Activated CD4-positive, alpha-beta memory T cell treated with anti-CD3 and anti-CD28 coated beads for 36 hours (primary cell): ENCODE measurements at regions of chr12 and their contacts with region 1.

Region 1: DNA sequence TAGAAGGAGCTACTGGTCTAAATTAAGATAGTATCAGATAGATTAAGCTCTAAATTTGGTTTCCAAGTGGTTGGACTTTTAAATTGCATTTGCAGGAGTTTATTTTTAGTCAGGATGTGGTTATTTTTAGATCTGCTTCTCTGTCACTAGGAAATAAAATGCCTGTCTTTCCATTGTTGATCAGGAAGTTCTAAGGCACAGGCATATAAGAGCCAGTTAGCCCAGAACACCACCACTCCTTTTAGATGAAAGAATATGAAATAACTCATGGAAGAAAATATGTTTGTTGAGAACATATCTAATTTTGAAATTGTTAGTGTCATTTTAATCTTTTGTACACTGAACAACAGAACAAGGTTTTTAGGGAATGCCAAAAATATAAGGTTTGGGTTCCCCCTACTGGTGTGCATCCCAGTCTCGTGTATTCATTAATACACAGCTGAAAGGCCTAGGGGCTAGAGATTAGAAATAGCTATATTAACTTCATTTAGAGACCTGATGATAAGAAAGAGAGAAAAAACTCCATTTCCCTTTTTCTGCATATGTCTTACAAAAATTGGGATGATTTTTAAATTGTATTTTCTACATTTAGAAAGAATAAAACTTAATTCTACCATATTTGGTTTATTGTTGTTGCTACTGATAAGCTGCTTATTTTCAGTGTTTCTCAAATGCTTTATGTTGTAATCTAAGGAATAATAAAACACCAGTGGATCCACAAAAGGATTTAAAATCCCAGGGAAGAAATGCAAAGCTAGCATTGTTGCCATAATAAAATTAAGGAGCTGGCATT is 67.2 kb downstream of the RIC8B start:
- DNase-seq: peak; percentile 14
- H3K4me3 Mint-ChIP-seq: no peak overlapping the region
- H3K27ac Mint-ChIP-seq: no peak overlapping the region
- H3K4me1 Mint-ChIP-seq: peaks cover 15% of the 10 kb centered on the region
- H3K27me3 Mint-ChIP-seq: no peaks in the 10 kb centered on the region

Region 2: GRCh38 chr12:106386813-106387535 is 454.7 kb before region 1 on chr12:
- CTCF ChIA-PET with region 1: interaction called, 14 read pairs
- POLR2A ChIA-PET with region 1: no interaction called
- intact Hi-C with region 1: loop called (anchors 1 kb)
- DNase-seq: no peak
- H3K4me3 Mint-ChIP-seq: no peak overlapping the region
- H3K27ac Mint-ChIP-seq: no peak overlapping the region
- H3K4me1 Mint-ChIP-seq: no peaks in the 10 kb centered on the region
- H3K27me3 Mint-ChIP-seq: no peaks in the 10 kb centered on the region

Region 3: GRCh38 chr12:106682592-106683234 is 159.0 kb before region 1 on chr12:
- CTCF ChIA-PET with region 1: interaction called, 13 read pairs
- POLR2A ChIA-PET with region 1: no interaction called
- intact Hi-C with region 1: no loop called
- DNase-seq: no peak
- H3K4me3 Mint-ChIP-seq: no peak overlapping the region
- H3K27ac Mint-ChIP-seq: no peak overlapping the region
- H3K4me1 Mint-ChIP-seq: no peaks in the 10 kb centered on the region
- H3K27me3 Mint-ChIP-seq: no peaks in the 10 kb centered on the region

Region 4: DNA sequence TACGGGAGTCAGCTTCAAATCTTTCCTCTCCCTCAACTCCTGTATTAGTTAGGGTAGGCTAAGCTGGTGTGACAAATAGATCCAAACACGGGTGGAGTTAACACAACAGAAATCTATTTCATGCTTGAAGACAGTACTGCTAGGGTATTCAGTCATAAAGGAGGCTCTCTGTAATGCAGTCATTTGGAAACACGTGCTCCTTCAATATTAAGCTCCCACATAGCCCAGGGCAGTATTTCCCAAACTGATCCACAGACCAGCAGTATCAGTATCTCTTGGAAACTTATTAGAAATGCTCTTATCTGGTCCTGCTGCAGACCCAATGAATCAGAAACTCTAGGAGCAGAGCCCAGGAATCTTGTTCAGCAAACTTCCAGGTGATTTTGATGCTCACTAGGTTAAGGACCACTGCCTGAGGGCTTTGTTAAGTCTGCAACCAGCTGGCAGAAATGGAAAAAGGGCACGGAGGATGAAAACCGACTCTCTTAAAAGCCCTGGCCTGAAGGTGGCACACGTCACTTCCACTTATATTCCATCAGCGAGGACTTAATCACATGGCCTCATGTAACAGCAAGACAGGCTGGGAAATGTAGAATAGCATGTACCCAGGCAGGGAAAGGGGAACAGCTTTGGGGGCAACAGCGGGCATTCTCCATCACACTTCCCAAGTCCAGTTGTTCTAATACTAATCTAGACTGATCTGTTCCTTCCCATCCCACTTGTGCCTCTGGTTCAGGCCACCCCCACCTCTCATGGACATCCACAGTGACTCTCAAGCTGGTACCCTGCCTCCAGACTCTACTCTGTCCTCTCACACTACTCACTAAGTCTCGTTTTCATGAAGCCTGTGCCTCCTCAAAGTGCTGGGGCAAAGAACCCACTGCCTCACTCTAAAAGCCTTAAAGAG is 105.4 kb before region 1 on chr12:
- CTCF ChIA-PET with region 1: interaction called, 9 read pairs
- POLR2A ChIA-PET with region 1: no interaction called
- intact Hi-C with region 1: loop called (anchors 5 kb)
- DNase-seq: peak; percentile 29
- H3K4me3 Mint-ChIP-seq: no peak overlapping the region
- H3K27ac Mint-ChIP-seq: no peak overlapping the region
- H3K4me1 Mint-ChIP-seq: peaks cover 7% of the 10 kb centered on the region
- H3K27me3 Mint-ChIP-seq: no peaks in the 10 kb centered on the region